ENCODE measurements at regions of chr7 and their contacts with region 1.

Region 1: DNA sequence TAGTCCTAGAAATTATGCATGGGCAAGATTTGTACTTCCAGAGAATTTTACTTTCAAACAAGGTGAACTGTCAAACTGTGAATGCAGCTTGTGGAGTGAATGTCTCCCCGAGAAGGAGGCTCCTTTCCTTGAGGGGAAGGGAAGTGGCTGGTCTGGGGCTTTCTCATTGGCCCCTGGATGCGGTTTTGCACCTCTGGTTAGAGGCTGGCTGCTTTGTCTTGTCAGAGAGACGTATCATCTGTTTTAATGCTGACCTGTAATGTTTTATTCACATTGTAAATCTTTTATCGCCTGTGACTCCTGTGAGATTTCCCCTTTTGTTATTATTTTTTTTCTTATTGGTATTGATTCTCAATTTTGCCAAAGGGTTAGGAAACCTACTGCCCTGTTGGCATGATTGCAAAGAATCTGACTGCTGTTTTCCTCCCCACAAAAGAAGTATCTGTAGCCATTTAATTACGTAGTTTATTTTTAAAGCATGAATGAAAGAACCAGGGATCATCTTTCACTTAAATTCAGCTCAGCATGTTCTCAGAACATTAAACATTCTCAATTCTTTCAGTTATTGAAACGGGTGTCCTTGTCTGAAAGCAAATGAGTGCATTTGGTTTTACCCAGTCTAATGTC is 238.3 kb upstream of the NFE2L3 start:
- DNase-seq: no peak
- ATAC-seq: no peak
- H3K4me3 ChIP-seq: no peak overlapping the region
- H3K4me3 Mint-ChIP-seq: no peak overlapping the region
- H3K27ac ChIP-seq: no peak overlapping the region
- H3K27ac Mint-ChIP-seq: no peak overlapping the region
- H3K4me1 ChIP-seq: no peaks in the 10 kb centered on the region
- H3K4me1 Mint-ChIP-seq: no peaks in the 10 kb centered on the region
- H3K27me3 ChIP-seq: peaks cover 0 to 18% (median 6%) of the 10 kb centered on the region in 4 experiments
- H3K27me3 Mint-ChIP-seq: peaks cover 26% of the 10 kb centered on the region
- CTCF ChIP-seq: no peak

Region 2: DNA sequence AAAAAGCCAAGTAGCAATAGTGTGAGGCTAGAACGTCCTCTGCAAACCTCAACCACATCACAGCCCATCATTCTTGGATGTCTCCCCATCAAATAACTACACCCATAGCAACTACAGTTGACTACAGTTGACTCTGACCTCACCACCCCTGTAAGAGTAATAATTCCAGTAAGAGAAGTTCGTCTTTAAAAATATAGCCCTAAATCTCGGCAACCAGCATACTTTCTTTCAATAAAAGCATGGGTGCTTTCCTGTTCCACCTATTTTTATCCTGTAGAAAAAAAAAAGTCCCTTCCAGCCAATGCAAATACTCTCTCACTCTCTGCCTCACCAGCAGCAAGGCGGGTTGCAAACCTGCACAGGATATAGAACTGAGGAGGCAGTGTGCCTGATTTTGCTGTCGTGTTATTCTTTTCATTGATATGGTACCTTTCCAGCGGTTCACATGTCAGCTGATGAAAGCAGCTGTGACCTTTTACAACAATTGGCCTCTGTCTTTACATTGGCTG is 50.8 kb after region 1 on chr7:
- CTCF ChIA-PET with region 1: no interaction called
- POLR2A ChIA-PET with region 1: no interaction called
- intact Hi-C with region 1: no loop called
- DNase-seq: peak; percentile 55
- ATAC-seq: peak; percentile 8
- H3K4me3 ChIP-seq: peak overlapping the region in 1 of 5 experiments; percentile 31
- H3K4me3 Mint-ChIP-seq: peak overlapping the region; percentile 70
- H3K27ac ChIP-seq: peak overlapping the region; percentile 31 to 38
- H3K27ac Mint-ChIP-seq: peak overlapping the region; percentile 62
- H3K4me1 ChIP-seq: peaks cover 30 to 42% of the 10 kb centered on the region in 2 donors
- H3K4me1 Mint-ChIP-seq: peaks cover 44% of the 10 kb centered on the region
- H3K27me3 ChIP-seq: peaks cover 0 to 19% (median 8%) of the 10 kb centered on the region in 4 experiments
- H3K27me3 Mint-ChIP-seq: peaks cover 26% of the 10 kb centered on the region
- CTCF ChIP-seq: no peak

Region 3: DNA sequence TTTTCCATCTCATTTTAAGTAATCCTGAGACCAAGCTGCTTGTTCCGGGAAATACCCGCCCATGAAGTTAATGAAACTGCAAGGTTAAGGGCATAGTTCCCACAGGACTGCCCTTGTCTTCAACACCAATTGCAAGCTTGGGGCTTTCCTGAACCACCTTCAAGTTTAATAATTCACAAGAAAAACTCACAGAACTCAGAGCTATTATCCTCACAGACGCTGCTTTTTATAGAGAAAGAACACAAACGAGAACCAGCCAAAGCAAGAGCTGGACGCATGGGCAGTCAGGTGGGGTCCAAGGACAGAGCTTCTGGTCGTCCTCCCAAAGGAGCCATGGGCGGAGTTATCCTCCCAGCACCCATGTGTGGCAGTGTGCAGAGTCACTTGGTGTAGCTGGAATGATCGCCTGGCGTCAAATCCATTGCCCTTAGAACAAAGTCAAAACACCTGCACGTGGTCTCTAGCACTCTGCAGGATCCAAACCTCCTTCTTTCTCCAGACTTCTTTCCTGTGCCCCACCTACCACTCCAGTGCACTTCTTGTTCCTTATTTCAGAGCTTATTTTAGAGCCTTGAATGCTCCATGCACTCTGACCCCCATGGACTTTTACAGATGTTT is 434.6 kb after region 1 on chr7:
- CTCF ChIA-PET with region 1: no interaction called
- POLR2A ChIA-PET with region 1: interaction called, 11 read pairs
- intact Hi-C with region 1: no loop called
- DNase-seq: no peak
- ATAC-seq: no peak
- H3K4me3 ChIP-seq: no peak overlapping the region
- H3K4me3 Mint-ChIP-seq: no peak overlapping the region
- H3K27ac ChIP-seq: no peak overlapping the region
- H3K27ac Mint-ChIP-seq: peak overlapping the region; percentile 32
- H3K4me1 ChIP-seq: peaks cover 0 to 3% of the 10 kb centered on the region in 2 donors
- H3K4me1 Mint-ChIP-seq: peaks cover 37% of the 10 kb centered on the region
- H3K27me3 ChIP-seq: no peaks in the 10 kb centered on the region
- H3K27me3 Mint-ChIP-seq: no peaks in the 10 kb centered on the region
- CTCF ChIP-seq: no peak